ENCODE measurements at regions of chr10 and their contacts with region 1.

Region 1: GRCh38 chr10:62482581-62482980 is 108.4 kb downstream of the ZNF365 start:
- DNase-seq: no peak
- H3K4me3 ChIP-seq: no peak overlapping the region
- H3K4me3 Mint-ChIP-seq: no peak overlapping the region
- H3K27ac ChIP-seq: no peak overlapping the region
- H3K27ac Mint-ChIP-seq: no peak overlapping the region
- H3K4me1 ChIP-seq: peaks cover 20 to 32% of the 10 kb centered on the region in 2 donors
- H3K4me1 Mint-ChIP-seq: peaks cover 30% of the 10 kb centered on the region
- H3K27me3 ChIP-seq: no peaks in the 10 kb centered on the region
- H3K27me3 Mint-ChIP-seq: peaks cover 0 to 5% (median 2%) of the 10 kb centered on the region in 3 donors
- CTCF ChIP-seq: no peak

Region 2: DNA sequence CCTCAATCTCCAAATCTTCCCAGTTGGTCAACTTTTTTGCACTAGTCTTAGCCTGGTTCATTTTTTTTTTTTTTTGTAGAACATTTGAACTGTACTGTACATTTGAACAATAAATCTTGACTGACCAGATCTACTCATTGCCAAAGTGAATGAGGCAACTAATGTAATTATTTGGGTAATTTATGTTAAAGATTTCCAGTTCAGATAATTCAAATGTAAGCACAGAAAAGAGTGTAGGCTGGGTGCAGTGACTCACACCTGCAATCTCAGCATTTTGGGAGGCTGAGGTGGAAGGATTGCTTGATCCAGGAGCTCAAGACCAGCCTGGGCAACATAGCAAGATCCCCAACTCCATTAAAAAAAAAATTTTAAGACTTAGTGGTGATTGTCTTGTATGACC is 32.8 kb before region 1 on chr10:
- intact Hi-C with region 1: loop called in 1 of 2 experiments (anchors 5 kb)
- DNase-seq: no peak
- H3K4me3 ChIP-seq: no peak overlapping the region
- H3K4me3 Mint-ChIP-seq: no peak overlapping the region
- H3K27ac ChIP-seq: no peak overlapping the region
- H3K27ac Mint-ChIP-seq: peak overlapping the region in 2 of 7 donors; percentile 31 to 32
- H3K4me1 ChIP-seq: peaks cover 11 to 13% of the 10 kb centered on the region in 2 donors
- H3K4me1 Mint-ChIP-seq: peaks cover 18% of the 10 kb centered on the region
- H3K27me3 ChIP-seq: no peaks in the 10 kb centered on the region
- H3K27me3 Mint-ChIP-seq: peaks cover 0 to 13% (median 2%) of the 10 kb centered on the region in 3 donors
- CTCF ChIP-seq: no peak

Region 3: DNA sequence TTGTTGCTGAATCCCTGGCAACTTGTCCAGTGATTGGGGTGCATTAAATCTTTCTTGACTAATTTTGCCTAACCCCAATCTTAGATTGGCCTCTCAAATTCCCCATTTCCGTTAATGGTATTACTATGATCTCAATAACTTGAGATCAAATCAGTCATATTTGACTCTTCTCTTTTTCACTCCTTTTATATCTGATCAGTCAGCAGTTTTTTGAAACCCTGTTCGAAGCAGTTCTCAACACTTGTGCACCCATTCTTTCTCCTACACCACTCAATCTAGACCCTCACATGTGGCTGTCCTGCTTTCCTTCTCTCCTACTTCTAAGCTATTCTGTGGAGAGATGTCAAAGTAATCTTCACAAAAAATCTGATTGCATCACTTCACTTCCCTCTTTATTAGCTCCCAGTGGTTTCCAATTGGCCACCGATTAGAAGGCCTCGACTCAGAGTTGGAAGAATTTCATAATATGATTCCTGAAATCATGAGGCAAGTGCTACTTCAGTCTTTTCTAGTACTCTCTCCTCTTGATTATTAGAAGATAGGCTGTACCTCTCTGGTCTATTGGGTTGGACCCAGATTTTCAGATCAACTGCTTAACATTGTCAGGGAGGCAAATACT is 20.5 kb after region 1 on chr10:
- intact Hi-C with region 1: no loop called
- DNase-seq: peak; percentile 76 to 92 (median 89)
- H3K4me3 ChIP-seq: peak overlapping the region in 1 of 3 experiments; percentile 17
- H3K4me3 Mint-ChIP-seq: peak overlapping the region in 1 of 2 donors; percentile 49
- H3K27ac ChIP-seq: peak overlapping the region in 1 of 2 donors; percentile 81
- H3K27ac Mint-ChIP-seq: peak overlapping the region; percentile 85 to 99 (median 94)
- H3K4me1 ChIP-seq: peaks cover 63 to 77% of the 10 kb centered on the region in 2 donors
- H3K4me1 Mint-ChIP-seq: peaks cover 56% of the 10 kb centered on the region
- H3K27me3 ChIP-seq: no peaks in the 10 kb centered on the region
- H3K27me3 Mint-ChIP-seq: peaks cover 0 to 3% (median 0%) of the 10 kb centered on the region in 3 donors
- CTCF ChIP-seq: no peak

Region 4: DNA sequence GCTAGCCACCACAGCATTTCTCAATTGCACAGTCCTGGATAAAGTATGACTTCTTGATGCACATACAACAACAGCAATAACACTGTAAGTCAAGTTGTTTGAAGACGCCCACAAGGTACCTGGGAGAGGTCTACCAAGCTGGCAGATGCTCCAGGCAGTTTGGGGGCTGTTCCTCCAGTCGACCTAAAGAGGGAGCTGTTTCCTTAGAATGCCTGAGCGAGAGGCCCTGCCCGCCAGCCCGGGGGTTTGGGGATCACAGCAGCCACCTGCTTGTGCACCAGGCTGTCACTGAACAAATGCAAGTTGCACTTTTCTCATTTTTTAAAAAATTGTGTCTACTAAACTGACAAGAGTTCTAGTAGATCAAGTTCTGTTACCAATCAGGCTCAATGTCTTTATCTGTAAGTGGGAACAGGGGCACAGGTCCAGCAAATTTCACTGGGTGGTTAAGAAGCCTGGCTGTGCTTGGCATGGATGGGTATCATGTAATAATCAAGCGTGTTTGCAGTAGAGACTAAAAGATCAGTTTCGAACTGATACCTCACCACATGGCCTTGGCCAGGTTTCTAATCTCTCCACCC is 128.2 kb after region 1 on chr10:
- intact Hi-C with region 1: no loop called
- DNase-seq: peak; percentile 71 to 84 (median 79)
- H3K4me3 ChIP-seq: no peak overlapping the region
- H3K4me3 Mint-ChIP-seq: no peak overlapping the region
- H3K27ac ChIP-seq: no peak overlapping the region
- H3K27ac Mint-ChIP-seq: peak overlapping the region in 5 of 7 donors; percentile 14 to 68 (median 57)
- H3K4me1 ChIP-seq: peaks cover 24 to 25% of the 10 kb centered on the region in 2 donors
- H3K4me1 Mint-ChIP-seq: peaks cover 26% of the 10 kb centered on the region
- H3K27me3 ChIP-seq: no peaks in the 10 kb centered on the region
- H3K27me3 Mint-ChIP-seq: peaks cover 4 to 7% (median 6%) of the 10 kb centered on the region in 3 donors
- CTCF ChIP-seq: peak; percentile 96

Measured in CD14-positive monocyte (primary cell).